Activated CD4-positive, alpha-beta memory T cell treated with anti-CD3 and anti-CD28 coated beads, Interleukin-2, amount 10 ng/mL, durations not matched to agents 7 days and 5 days (primary cell): ENCODE measurements at regions of chr2 and their contacts with region 1.

Region 1: GRCh38 chr2:136135921-136136906 is 18.3 kb upstream of the CXCR4 start:
- DNase-seq: peak; percentile 67
- H3K4me3 Mint-ChIP-seq: no peak overlapping the region
- H3K27ac Mint-ChIP-seq: peak overlapping the region; percentile 86
- H3K4me1 Mint-ChIP-seq: peaks cover 84% of the 10 kb centered on the region
- H3K27me3 Mint-ChIP-seq: peaks cover 43% of the 10 kb centered on the region

Region 2: GRCh38 chr2:136008205-136008865 is 127.9 kb before region 1 on chr2:
- CTCF ChIA-PET with region 1: no interaction called
- POLR2A ChIA-PET with region 1: interaction called, 11 read pairs
- DNase-seq: peak; percentile 90
- H3K4me3 Mint-ChIP-seq: peak overlapping the region; percentile 50
- H3K27ac Mint-ChIP-seq: peak overlapping the region; percentile 94
- H3K4me1 Mint-ChIP-seq: peaks cover 68% of the 10 kb centered on the region
- H3K27me3 Mint-ChIP-seq: no peaks in the 10 kb centered on the region

Region 3: DNA sequence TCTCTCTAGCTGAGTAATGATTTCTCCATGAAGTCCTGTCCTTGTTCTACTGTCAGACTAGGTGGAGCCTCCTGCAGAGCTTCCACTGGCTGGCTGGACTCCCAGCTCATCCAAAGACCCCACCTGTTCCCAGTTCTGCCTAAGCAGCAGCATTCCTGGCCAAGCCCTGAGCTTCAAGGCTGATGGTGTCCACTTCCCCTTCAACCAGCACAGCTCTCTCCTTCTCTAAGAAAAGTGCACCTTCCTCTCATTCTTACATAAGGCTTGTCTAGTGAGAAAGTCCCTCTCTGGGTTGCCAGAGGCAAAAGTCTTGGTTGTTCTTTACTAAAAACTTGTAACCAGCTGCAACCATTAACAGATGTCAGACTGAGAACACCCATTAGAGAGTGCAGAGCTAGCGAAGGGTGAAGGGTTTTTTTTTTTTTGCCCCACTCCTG is 77.2 kb before region 1 on chr2:
- CTCF ChIA-PET with region 1: no interaction called
- POLR2A ChIA-PET with region 1: interaction called, 64 read pairs
- DNase-seq: no peak
- H3K4me3 Mint-ChIP-seq: no peak overlapping the region
- H3K27ac Mint-ChIP-seq: peak overlapping the region; percentile 36
- H3K4me1 Mint-ChIP-seq: peaks cover 54% of the 10 kb centered on the region
- H3K27me3 Mint-ChIP-seq: no peaks in the 10 kb centered on the region

Region 4: DNA sequence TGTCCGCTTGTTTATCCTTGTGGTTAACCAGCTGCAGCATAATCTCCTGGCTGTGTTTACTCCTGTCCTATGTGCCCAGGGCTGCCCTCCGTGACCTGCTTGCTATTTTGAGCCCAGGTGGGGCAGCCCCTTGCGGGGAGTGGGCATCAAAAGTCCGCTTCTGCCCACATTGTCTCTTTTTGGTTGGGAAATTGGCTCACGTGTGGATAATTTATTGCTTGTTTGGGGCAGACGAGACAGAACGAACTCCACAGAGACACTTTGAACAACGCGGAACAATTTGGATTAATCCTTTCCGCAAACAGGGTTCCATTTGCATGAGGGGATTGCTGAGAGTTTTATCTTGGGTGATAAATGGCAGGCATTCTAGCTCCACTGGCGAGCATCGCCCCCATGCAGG is 10.2 kb before region 1 on chr2:
- CTCF ChIA-PET with region 1: no interaction called
- POLR2A ChIA-PET with region 1: interaction called, 12 read pairs
- DNase-seq: no peak
- H3K4me3 Mint-ChIP-seq: no peak overlapping the region
- H3K27ac Mint-ChIP-seq: no peak overlapping the region
- H3K4me1 Mint-ChIP-seq: peaks cover 53% of the 10 kb centered on the region
- H3K27me3 Mint-ChIP-seq: peaks cover 67% of the 10 kb centered on the region

Region 5: DNA sequence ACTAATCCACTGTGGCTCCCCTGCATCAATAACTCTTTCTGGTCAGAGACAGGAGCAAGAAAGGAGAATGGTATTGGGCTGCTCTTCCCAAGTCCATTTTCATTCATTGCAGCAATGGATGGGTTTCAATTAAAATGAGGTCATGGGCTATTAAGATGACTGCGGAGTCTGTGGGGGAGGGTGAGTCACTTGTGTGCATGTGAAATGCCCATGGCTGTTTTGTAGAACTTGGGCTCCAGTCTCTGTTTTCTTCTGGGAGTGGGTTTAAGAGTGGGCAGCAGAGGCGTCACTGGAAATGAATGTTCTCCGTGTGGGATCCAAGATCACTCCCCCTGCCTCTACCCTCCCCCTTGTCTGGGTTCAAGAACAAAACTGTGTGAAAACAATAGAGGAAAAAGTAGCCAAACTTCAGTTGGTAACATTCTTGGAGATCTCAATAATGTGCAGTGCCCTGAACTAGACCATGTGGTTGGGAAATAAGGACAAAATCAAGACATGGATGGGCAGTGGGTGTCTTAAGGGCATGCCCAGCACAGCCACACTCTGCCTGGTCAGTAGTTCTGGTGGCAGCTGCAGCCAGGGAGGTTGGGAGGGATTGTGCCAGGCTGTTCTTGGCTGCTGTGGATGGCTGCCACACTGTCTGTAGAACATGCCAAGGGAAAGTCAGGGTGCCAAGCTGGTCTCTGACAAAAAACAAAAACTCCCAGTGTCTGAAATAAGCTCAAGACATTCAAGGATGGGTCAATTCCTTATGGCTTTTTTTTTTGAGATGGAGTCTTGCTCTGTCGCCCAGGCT is 50.0 kb after region 1 on chr2:
- CTCF ChIA-PET with region 1: no interaction called
- POLR2A ChIA-PET with region 1: no interaction called
- DNase-seq: no peak
- H3K4me3 Mint-ChIP-seq: no peak overlapping the region
- H3K27ac Mint-ChIP-seq: no peak overlapping the region
- H3K4me1 Mint-ChIP-seq: no peaks in the 10 kb centered on the region
- H3K27me3 Mint-ChIP-seq: peaks cover 2% of the 10 kb centered on the region

Region 6: DNA sequence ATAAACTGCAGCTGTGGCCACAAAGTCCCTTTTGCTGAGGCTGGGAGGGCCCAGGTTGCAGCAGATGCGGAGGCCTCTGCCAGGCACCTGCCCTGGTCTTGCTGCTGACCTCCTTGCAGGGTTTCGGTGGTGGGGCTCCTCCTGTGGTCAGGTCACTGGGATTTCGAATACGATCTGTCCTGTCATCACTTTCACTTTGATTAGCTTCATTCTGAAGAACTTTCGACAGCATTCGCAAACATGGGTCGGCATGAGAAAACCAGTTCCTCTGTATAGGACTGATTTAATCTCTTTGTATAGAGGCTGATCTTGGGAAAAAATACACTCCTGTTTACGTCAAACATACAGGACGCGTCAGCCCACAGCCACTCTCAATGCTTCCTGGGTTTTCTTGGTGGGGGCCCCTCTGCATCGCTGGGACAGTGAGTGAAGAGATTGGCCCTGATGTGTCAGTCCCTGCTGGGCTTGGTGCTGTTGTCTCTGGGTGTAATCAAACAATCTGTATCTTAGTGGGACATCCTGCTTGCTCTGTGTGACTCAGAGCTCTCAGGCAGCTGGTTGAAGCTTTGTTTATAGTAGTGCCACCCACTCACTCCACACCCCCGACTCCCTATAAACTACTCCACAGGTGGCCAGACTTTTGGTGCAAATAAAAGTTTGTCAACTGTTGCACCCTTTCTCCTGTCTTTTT is 191.1 kb after region 1 on chr2:
- CTCF ChIA-PET with region 1: no interaction called
- POLR2A ChIA-PET with region 1: interaction called, 25 read pairs
- DNase-seq: peak; percentile 85
- H3K4me3 Mint-ChIP-seq: peak overlapping the region; percentile 59
- H3K27ac Mint-ChIP-seq: peak overlapping the region; percentile 90
- H3K4me1 Mint-ChIP-seq: peaks cover 66% of the 10 kb centered on the region
- H3K27me3 Mint-ChIP-seq: no peaks in the 10 kb centered on the region

Region 7: GRCh38 chr2:136384531-136385303 is 248.5 kb after region 1 on chr2:
- CTCF ChIA-PET with region 1: interaction called, 6 read pairs
- POLR2A ChIA-PET with region 1: interaction called, 13 read pairs
- DNase-seq: peak; percentile 64
- H3K4me3 Mint-ChIP-seq: peak overlapping the region; percentile 11
- H3K27ac Mint-ChIP-seq: peak overlapping the region; percentile 91
- H3K4me1 Mint-ChIP-seq: peaks cover 45% of the 10 kb centered on the region
- H3K27me3 Mint-ChIP-seq: no peaks in the 10 kb centered on the region